BJ (cell line): ENCODE measurements at regions of chr2 and their contacts with region 1.

Region 1: GRCh38 chr2:72887754-72888437 is 688 bp downstream of the SPR start:
- DNase-seq: no peak
- H3K4me3 ChIP-seq: peak overlapping the region; percentile 60
- H3K27me3 ChIP-seq: peaks cover 2% of the 10 kb centered on the region
- CTCF ChIP-seq: peak; percentile 99

Region 2: DNA sequence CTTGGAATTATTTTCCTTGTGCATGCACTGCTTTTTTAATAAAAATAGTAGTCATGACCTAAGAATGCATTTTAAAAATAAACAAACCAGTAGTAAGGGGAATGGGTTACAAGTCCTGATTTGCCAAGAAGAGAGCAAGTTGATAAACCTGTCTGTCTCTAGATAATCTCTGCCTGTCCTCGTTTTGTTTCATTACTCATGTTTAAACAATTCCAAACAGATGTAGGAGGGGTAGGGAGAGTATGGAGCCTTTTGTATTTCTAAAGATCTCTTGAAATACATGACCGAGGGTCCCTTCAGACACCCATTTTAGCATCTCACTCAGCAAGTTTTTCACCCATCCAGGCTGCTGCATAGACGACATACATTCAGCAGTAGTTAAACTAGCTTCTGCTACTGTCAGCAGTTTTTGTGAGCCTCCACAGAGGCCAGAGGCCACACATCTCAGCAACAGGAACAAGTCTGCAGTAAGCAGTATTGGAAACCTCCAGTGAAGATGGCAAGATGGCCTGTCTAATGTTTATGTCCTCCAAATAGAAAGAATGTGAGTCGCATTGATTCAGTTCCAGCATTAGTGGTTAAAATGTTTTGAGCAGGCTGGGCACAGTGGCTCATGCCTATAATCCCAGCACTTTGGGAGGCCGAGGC is 59.8 kb before region 1 on chr2:
- CTCF ChIA-PET with region 1: no interaction called
- POLR2A ChIA-PET with region 1: no interaction called
- DNase-seq: peak; percentile 33
- H3K4me3 ChIP-seq: no peak overlapping the region
- H3K27me3 ChIP-seq: no peaks in the 10 kb centered on the region
- CTCF ChIP-seq: no peak

Region 3: DNA sequence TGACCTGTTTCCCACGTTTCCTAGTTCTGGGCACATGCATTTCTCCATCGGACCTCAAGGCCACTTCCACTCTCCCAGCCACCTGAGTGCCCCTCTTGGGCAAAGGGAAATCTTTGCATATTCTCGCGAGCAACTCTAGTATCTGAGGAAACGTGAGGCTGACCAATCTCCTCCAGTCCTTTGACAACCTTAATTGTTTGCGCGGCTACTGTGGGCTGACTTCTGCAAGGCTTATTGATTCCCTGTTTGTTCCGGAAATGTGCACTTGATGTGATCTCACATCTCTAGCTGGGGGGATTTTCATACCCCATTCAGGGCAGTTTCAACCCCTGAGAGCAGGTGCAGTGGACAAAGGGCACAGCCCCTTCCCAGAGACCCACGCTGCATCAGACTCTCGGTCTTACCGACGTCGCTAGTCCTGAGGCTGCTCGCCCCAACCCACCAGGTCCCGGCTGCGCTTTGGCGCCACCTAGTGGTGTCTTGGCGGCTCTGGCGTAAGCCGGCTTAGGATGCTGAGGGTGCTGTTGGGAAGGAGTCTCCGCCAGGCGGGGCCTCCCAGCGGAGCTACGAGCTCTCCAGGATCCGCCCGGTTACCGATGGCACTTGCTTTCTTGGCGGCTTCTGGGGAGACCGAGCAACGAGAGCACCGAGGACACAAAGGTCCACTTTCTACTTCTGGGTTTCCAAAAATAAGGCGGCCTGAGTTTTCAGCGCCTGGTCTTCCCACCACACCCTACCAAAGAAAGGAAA is 25.5 kb before region 1 on chr2:
- CTCF ChIA-PET with region 1: interaction called, 17 read pairs
- POLR2A ChIA-PET with region 1: no interaction called
- DNase-seq: no peak
- H3K4me3 ChIP-seq: peak overlapping the region; percentile 14; the same call in 1 of the 2 replicates
- H3K27me3 ChIP-seq: peaks cover 9% of the 10 kb centered on the region
- CTCF ChIP-seq: peak; percentile 100

Region 4: GRCh38 chr2:72925328-72925943 is 37.5 kb after region 1 on chr2:
- CTCF ChIA-PET with region 1: interaction called, 18 read pairs
- POLR2A ChIA-PET with region 1: no interaction called
- DNase-seq: no peak
- H3K4me3 ChIP-seq: no peak overlapping the region
- H3K27me3 ChIP-seq: peaks cover 81% of the 10 kb centered on the region
- CTCF ChIP-seq: no peak

Region 5: DNA sequence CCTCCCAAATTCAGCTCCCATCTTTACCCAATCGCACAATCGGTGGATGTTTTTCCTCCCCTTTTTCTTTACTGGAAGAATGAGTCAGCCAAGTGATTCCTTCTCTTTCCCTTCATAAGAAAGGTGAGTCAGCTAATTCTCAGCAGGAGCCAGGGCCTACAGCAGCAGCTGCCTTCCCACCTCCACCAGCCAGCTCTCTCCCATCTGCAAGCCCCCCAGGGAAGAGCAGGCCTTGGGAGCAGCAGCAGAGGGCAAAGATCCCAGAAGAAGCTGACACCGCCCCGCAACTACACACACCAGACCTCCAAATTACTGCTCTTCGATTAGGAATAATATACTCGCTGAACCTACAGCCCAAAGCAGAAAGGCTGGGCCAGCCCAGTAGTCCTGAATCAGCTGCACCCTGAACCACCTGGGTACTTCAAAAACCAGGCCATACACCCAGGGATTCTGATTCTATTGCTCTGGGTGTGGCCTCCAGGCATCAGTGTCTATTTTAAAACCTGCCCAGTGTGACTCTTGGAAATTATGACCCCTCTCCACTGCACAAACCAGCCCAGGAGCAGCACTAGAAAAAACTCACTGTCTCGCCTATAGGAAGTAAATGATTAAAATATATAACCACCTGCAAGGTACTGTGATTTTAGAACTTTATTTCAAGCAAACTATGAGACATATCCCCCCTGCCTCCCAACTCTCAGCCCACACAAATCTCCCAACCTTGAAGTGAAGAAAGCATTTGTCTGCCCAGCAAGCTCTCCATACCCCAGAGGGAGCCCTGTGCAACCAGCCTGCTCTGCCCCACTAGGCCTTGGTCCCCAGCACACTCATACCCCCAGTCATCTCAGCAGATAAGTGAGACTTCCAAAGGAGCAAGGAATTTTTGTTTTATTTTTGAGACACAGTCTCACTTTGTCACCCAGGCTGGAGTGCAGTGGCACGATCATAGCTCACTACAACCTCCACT is 176.3 kb after region 1 on chr2:
- CTCF ChIA-PET with region 1: interaction called, 10 read pairs
- POLR2A ChIA-PET with region 1: no interaction called
- DNase-seq: peak; percentile 34
- H3K4me3 ChIP-seq: no peak overlapping the region
- H3K27me3 ChIP-seq: no peaks in the 10 kb centered on the region
- CTCF ChIP-seq: no peak

Region 6: GRCh38 chr2:73163483-73164367 is 275.8 kb after region 1 on chr2:
- CTCF ChIA-PET with region 1: interaction called, 98 read pairs
- POLR2A ChIA-PET with region 1: no interaction called
- DNase-seq: no peak
- H3K4me3 ChIP-seq: no peak overlapping the region
- H3K27me3 ChIP-seq: peaks cover 6% of the 10 kb centered on the region
- CTCF ChIP-seq: peak; percentile 85

Region 7: GRCh38 chr2:73243884-73244570 is 356.1 kb after region 1 on chr2:
- CTCF ChIA-PET with region 1: no interaction called
- POLR2A ChIA-PET with region 1: no interaction called
- DNase-seq: peak; percentile 29
- H3K4me3 ChIP-seq: no peak overlapping the region
- H3K27me3 ChIP-seq: no peaks in the 10 kb centered on the region
- CTCF ChIP-seq: no peak